Caco-2 (cell line): ENCODE measurements at regions of chr4 and their contacts with region 1.

Region 1: DNA sequence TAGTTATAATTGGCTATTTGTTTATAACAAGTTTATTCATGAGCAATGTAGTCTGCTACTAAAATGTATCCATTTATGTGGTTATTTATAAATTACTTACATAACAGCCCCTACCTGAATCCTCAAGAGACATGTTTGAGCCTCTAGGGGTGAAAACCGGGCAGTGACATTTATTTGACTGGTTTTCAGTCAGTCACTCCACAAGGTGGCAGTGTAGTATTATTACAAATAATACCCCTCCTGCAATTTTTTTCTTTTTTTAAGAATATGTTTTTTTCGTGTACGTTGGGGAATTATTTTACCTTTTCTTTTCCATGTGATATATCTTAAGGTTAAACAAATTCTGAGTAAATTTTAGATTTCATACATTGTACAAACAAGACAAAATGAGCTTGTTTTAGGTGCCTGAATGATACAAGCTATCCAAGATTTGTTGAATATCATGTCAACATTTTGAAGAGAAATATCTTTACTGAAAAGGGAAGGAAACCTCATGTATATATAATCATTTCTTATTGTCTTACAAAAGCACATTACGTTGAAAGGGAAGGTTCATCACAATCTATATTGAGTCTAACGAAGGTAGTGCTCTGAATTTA is 598.7 kb upstream of the TECRL start:
- DNase-seq: peak; percentile 26 to 37
- H3K4me3 ChIP-seq: no peak overlapping the region
- H3K4me3 Mint-ChIP-seq: no peak overlapping the region
- H3K27ac Mint-ChIP-seq: no peak overlapping the region
- H3K4me1 ChIP-seq: no peaks in the 10 kb centered on the region
- H3K4me1 Mint-ChIP-seq: no peaks in the 10 kb centered on the region
- H3K27me3 ChIP-seq: no peaks in the 10 kb centered on the region
- H3K27me3 Mint-ChIP-seq: no peaks in the 10 kb centered on the region
- CTCF ChIP-seq: peak; percentile 43 to 52

Region 2: GRCh38 chr4:64617800-64618199 is 390.1 kb before region 1 on chr4:
- CTCF ChIA-PET with region 1: no interaction called
- POLR2A ChIA-PET with region 1: no interaction called
- intact Hi-C with region 1: no loop called
- DNase-seq: no peak
- H3K4me3 ChIP-seq: no peak overlapping the region
- H3K4me3 Mint-ChIP-seq: no peak overlapping the region
- H3K27ac Mint-ChIP-seq: no peak overlapping the region
- H3K4me1 ChIP-seq: no peaks in the 10 kb centered on the region
- H3K4me1 Mint-ChIP-seq: no peaks in the 10 kb centered on the region
- H3K27me3 ChIP-seq: no peaks in the 10 kb centered on the region
- H3K27me3 Mint-ChIP-seq: no peaks in the 10 kb centered on the region
- CTCF ChIP-seq: no peak

Region 3: DNA sequence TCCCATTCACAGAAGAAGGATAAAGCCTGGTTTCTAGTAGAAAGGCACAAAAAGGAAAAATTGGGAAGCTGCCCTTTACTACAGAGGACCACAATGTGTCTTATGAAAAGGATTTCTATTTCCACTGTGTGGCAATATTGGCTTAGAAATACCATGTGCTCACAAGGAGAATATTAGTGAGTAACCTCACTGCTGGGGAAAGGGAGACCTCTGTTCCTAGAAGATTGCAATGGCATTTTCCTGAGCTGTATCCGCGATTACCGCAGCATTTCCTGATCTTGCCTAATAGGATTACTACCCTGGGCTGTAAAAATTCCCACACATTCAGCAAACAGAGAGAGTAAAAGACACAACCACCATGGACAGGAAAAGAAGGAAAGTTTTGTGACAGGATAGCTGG is 289.8 kb before region 1 on chr4:
- CTCF ChIA-PET with region 1: no interaction called
- POLR2A ChIA-PET with region 1: no interaction called
- intact Hi-C with region 1: loop called (anchors 5 kb)
- DNase-seq: no peak
- H3K4me3 ChIP-seq: no peak overlapping the region
- H3K4me3 Mint-ChIP-seq: no peak overlapping the region
- H3K27ac Mint-ChIP-seq: no peak overlapping the region
- H3K4me1 ChIP-seq: no peaks in the 10 kb centered on the region
- H3K4me1 Mint-ChIP-seq: no peaks in the 10 kb centered on the region
- H3K27me3 ChIP-seq: no peaks in the 10 kb centered on the region
- H3K27me3 Mint-ChIP-seq: no peaks in the 10 kb centered on the region
- CTCF ChIP-seq: no peak

Region 4: GRCh38 chr4:65089666-65090065 is 81.7 kb after region 1 on chr4:
- CTCF ChIA-PET with region 1: no interaction called
- POLR2A ChIA-PET with region 1: no interaction called
- intact Hi-C with region 1: no loop called
- DNase-seq: peak in 1 of 2 experiments; percentile 2
- H3K4me3 ChIP-seq: no peak overlapping the region
- H3K4me3 Mint-ChIP-seq: no peak overlapping the region
- H3K27ac Mint-ChIP-seq: no peak overlapping the region
- H3K4me1 ChIP-seq: no peaks in the 10 kb centered on the region
- H3K4me1 Mint-ChIP-seq: no peaks in the 10 kb centered on the region
- H3K27me3 ChIP-seq: no peaks in the 10 kb centered on the region
- H3K27me3 Mint-ChIP-seq: no peaks in the 10 kb centered on the region
- CTCF ChIP-seq: no peak

Region 5: GRCh38 chr4:66688674-66689073 is 1680.7 kb after region 1 on chr4:
- CTCF ChIA-PET with region 1: no interaction called
- POLR2A ChIA-PET with region 1: no interaction called
- intact Hi-C with region 1: loop called (anchors 10 kb)
- DNase-seq: no peak
- H3K4me3 ChIP-seq: no peak overlapping the region
- H3K4me3 Mint-ChIP-seq: no peak overlapping the region
- H3K27ac Mint-ChIP-seq: no peak overlapping the region
- H3K4me1 ChIP-seq: no peaks in the 10 kb centered on the region
- H3K4me1 Mint-ChIP-seq: no peaks in the 10 kb centered on the region
- H3K27me3 ChIP-seq: no peaks in the 10 kb centered on the region
- H3K27me3 Mint-ChIP-seq: no peaks in the 10 kb centered on the region
- CTCF ChIP-seq: peak in 1 of 2 experiments; percentile 23